ENCODE measurements at regions of chr19 and their contacts with region 1.

Region 1: GRCh38 chr19:51607920-51608562 is 22.2 kb downstream of the SIGLEC5 start:
- DNase-seq: peak; percentile 81
- H3K4me3 Mint-ChIP-seq: no peak overlapping the region
- H3K27ac Mint-ChIP-seq: no peak overlapping the region
- H3K4me1 Mint-ChIP-seq: peaks cover 9% of the 10 kb centered on the region
- H3K27me3 Mint-ChIP-seq: peaks cover 34% of the 10 kb centered on the region

Region 2: GRCh38 chr19:51393959-51394836 is 213.8 kb before region 1 on chr19:
- CTCF ChIA-PET with region 1: no interaction called
- intact Hi-C with region 1: no loop called
- DNase-seq: peak; percentile 98
- H3K4me3 Mint-ChIP-seq: peak overlapping the region; percentile 95
- H3K27ac Mint-ChIP-seq: peak overlapping the region; percentile 96
- H3K4me1 Mint-ChIP-seq: peaks cover 35% of the 10 kb centered on the region
- H3K27me3 Mint-ChIP-seq: no peaks in the 10 kb centered on the region

Region 3: DNA sequence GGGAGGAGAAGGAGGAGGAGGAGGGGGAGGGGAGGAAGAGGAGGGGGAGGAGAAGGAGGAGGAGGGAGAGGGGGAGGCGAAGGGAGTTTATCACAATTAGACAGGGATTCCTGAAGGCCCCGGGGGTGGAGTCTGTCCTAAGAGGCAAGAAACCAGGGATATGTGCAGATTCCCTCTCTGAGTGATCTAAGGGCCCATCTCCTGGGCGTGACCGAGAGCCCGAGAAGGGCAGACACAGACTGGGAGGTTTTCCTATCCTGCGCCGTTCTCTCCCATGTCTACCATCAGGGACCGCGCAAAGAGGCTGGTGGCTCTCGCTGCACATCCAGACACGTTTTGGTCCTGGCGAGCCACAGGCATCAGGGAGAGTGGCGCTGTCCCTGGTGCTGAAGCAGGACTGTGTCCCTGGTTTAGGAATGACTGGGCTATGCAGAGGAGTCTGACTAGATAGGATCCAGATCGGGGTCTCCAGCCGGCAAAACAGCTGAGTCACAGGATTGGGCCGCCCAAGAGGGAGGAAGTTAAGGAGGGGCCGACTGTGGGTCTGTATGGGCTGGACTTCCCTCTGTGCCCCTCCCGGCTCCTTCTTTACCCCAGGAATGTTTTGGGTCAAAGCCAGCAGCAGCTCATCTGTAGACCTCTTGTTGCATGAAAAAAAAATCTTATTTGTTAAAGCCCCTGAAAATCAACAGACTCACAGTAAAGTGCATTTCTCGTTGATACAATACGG is 54.9 kb before region 1 on chr19:
- CTCF ChIA-PET with region 1: no interaction called
- intact Hi-C with region 1: loop called (anchors 1 kb)
- DNase-seq: peak; percentile 76
- H3K4me3 Mint-ChIP-seq: no peak overlapping the region
- H3K27ac Mint-ChIP-seq: no peak overlapping the region
- H3K4me1 Mint-ChIP-seq: peaks cover 6% of the 10 kb centered on the region
- H3K27me3 Mint-ChIP-seq: peaks cover 52% of the 10 kb centered on the region

Region 4: GRCh38 chr19:51621178-51621577 is 13.1 kb after region 1 on chr19:
- CTCF ChIA-PET with region 1: no interaction called
- intact Hi-C with region 1: no loop called
- DNase-seq: no peak
- H3K4me3 Mint-ChIP-seq: no peak overlapping the region
- H3K27ac Mint-ChIP-seq: no peak overlapping the region
- H3K4me1 Mint-ChIP-seq: no peaks in the 10 kb centered on the region
- H3K27me3 Mint-ChIP-seq: peaks cover 14% of the 10 kb centered on the region

Region 5: GRCh38 chr19:51660975-51661600 is 53.0 kb after region 1 on chr19:
- CTCF ChIA-PET with region 1: interaction called, 11 read pairs
- intact Hi-C with region 1: no loop called
- DNase-seq: peak; percentile 89
- H3K4me3 Mint-ChIP-seq: no peak overlapping the region
- H3K27ac Mint-ChIP-seq: no peak overlapping the region
- H3K4me1 Mint-ChIP-seq: peaks cover 5% of the 10 kb centered on the region
- H3K27me3 Mint-ChIP-seq: peaks cover 19% of the 10 kb centered on the region